PC-3 (cell line): ENCODE measurements at regions of chr10 and their contacts with region 1.

Region 1: GRCh38 chr10:87094373-87095235 is at the starts of genes GLUD1 and SHLD2:
- DNase-seq: peak; percentile 84
- ATAC-seq: peak; percentile 59
- H3K4me3 ChIP-seq: peak within 1 kb of the TSS; percentile 90
- H3K27ac ChIP-seq: peak within 1 kb of the TSS; percentile 84
- H3K4me1 ChIP-seq: peaks cover 36% of the 10 kb centered on the region
- H3K27me3 ChIP-seq: no peaks in the 10 kb centered on the region
- CTCF ChIP-seq: no peak
- total RNA-seq, gene GLUD1: 67.9 and 75.9 TPM in 2 replicates
- total RNA-seq, gene SHLD2: 13.0 and 16.0 TPM in 2 replicates

Region 2: DNA sequence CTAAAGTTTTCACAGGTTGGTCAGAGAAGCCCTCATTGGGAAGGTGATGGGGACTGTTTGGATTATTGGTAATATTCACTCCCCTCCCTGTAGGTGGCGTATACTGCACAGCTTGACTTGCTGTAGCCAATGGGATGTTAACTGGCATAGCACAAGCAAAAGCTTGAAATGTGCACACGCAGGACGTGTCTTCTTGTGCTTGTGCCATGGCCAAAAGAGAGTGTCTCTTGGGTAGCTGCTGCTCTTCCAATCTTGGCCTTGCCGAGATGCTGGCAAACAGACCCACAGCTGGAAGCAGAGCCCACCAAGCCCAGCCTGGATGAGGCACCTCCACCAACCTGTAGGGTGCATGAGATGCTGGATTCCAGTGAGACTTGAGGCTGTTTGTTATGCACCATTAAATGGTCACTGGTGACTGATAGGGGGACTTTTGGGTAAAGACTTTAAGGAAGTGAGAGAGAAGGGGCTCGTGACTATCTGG is 994.0 kb before region 1 on chr10:
- CTCF ChIA-PET with region 1: no interaction called
- POLR2A ChIA-PET with region 1: no interaction called
- intact Hi-C with region 1: no loop called
- DNase-seq: peak; percentile 23
- ATAC-seq: no peak
- H3K4me3 ChIP-seq: no peak overlapping the region
- H3K27ac ChIP-seq: no peak overlapping the region
- H3K4me1 ChIP-seq: no peaks in the 10 kb centered on the region
- H3K27me3 ChIP-seq: no peaks in the 10 kb centered on the region
- CTCF ChIP-seq: peak; percentile 47; the same call in 1 of the 2 replicates

Region 3: DNA sequence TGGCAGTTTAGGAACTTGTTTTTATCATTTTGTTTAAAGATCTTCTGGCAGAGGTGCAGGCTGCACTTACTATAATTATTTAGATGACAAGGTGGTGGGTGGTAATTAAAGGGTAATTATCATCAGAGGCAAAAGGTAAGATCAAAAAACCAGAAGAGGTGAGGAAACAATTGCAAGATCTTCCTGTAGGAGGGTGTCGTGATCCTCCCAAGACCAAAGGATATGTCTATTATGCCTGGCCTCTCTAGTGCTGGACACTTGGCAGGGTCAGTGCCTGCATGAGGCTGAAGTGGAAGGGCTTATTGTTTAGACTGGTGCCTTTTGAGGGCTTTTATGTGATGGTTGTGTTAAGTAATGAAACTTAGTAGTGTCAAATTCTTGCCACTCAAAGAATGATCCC is 571.3 kb before region 1 on chr10:
- CTCF ChIA-PET with region 1: no interaction called
- POLR2A ChIA-PET with region 1: no interaction called
- intact Hi-C with region 1: no loop called
- DNase-seq: peak; percentile 43
- ATAC-seq: peak; percentile 14; the same call in 1 of the 2 replicates
- H3K4me3 ChIP-seq: peak overlapping the region; percentile 96
- H3K27ac ChIP-seq: no peak overlapping the region
- H3K4me1 ChIP-seq: peaks cover 18% of the 10 kb centered on the region
- H3K27me3 ChIP-seq: no peaks in the 10 kb centered on the region
- CTCF ChIP-seq: peak; percentile 59

Region 4: DNA sequence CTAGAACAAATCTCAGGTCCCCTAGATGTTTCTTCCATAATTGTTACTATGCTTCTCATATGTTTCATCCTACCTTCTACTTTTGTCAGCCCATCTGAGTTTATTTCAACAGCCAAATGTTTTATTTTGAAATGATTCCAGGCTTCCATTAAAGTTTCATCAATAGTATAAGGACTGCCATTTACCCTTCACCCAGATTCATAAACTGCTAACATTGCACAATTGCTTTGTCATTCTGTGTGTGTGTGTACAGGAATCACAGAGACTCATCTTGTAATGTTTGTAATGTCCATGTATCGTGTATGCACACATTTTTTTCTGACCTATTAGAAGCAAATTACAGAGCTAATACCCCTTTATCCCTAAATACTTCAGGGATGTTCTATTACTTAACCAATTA is 162.7 kb before region 1 on chr10:
- CTCF ChIA-PET with region 1: no interaction called
- POLR2A ChIA-PET with region 1: no interaction called
- intact Hi-C with region 1: no loop called
- DNase-seq: peak; percentile 60
- ATAC-seq: peak; percentile 57
- H3K4me3 ChIP-seq: no peak overlapping the region
- H3K27ac ChIP-seq: no peak overlapping the region
- H3K4me1 ChIP-seq: peaks cover 13% of the 10 kb centered on the region
- H3K27me3 ChIP-seq: no peaks in the 10 kb centered on the region
- CTCF ChIP-seq: no peak

Region 5: GRCh38 chr10:86971232-86971991 is 123.2 kb before region 1 on chr10:
- CTCF ChIA-PET with region 1: interaction called, 4 read pairs
- POLR2A ChIA-PET with region 1: interaction called, 4 read pairs
- intact Hi-C with region 1: loop called (anchors 1 kb)
- DNase-seq: peak; percentile 87
- ATAC-seq: peak; percentile 39
- H3K4me3 ChIP-seq: peak overlapping the region; percentile 71
- H3K27ac ChIP-seq: peak overlapping the region; percentile 94
- H3K4me1 ChIP-seq: peaks cover 64% of the 10 kb centered on the region
- H3K27me3 ChIP-seq: no peaks in the 10 kb centered on the region
- CTCF ChIP-seq: 0 out of 2 replicates have a peak, but pooled peaks have one; percentile 8

Region 6: GRCh38 chr10:87000491-87000890 is 94.1 kb before region 1 on chr10:
- CTCF ChIA-PET with region 1: no interaction called
- POLR2A ChIA-PET with region 1: no interaction called
- intact Hi-C with region 1: loop called (anchors 5 kb)
- DNase-seq: peak; percentile 19
- ATAC-seq: peak; percentile 62
- H3K4me3 ChIP-seq: no peak overlapping the region
- H3K27ac ChIP-seq: no peak overlapping the region
- H3K4me1 ChIP-seq: 0 out of 2 replicates have a peak, but pooled peaks cover 3% of the 10 kb centered on the region
- H3K27me3 ChIP-seq: no peaks in the 10 kb centered on the region
- CTCF ChIP-seq: no peak

Region 7: GRCh38 chr10:87700031-87700796 is 605.6 kb after region 1 on chr10:
- CTCF ChIA-PET with region 1: no interaction called
- POLR2A ChIA-PET with region 1: no interaction called
- intact Hi-C with region 1: no loop called
- DNase-seq: peak; percentile 60
- ATAC-seq: peak; percentile 46
- H3K4me3 ChIP-seq: no peak overlapping the region
- H3K27ac ChIP-seq: peak overlapping the region; percentile 78
- H3K4me1 ChIP-seq: peaks cover 29% of the 10 kb centered on the region
- H3K27me3 ChIP-seq: no peaks in the 10 kb centered on the region
- CTCF ChIP-seq: no peak